Activated CD4-positive, alpha-beta T cell treated with anti-CD3 and anti-CD28 coated beads, Interleukin-2, amount 10 ng/mL, durations not matched to agents 24 days and 14 days (primary cell): ENCODE measurements at regions of chrX and their contacts with region 1.

Region 1: DNA sequence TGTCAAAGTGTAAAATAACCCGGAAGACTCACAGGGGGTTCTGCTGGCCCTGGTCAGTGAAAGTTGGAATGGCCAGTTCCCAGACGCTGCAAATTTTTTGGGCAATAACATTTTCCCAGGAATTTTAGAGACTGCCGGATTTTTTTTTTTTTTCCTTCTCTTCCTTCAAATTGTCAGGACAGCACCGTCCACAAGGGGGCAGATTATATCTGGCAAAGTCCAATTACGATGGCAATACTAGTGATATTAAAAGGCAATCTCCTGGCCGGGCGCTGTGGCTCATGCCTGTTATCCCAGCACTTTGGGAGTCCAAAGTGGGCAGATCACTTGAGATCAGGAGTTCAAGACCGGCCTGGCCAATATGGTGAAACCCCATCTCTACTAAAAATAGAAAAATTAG is 20.5 kb downstream of the SLC25A5 start:
- DNase-seq: peak; percentile 74
- H3K4me3 Mint-ChIP-seq: no peak overlapping the region
- H3K27ac Mint-ChIP-seq: no peak overlapping the region
- H3K4me1 Mint-ChIP-seq: no peaks in the 10 kb centered on the region
- H3K27me3 Mint-ChIP-seq: no peaks in the 10 kb centered on the region

Region 2: GRCh38 chrX:119880552-119881437 is 392.0 kb after region 1 on chrX:
- intact Hi-C with region 1: loop called (anchors 5 kb)
- DNase-seq: peak; percentile 77
- H3K4me3 Mint-ChIP-seq: no peak overlapping the region
- H3K27ac Mint-ChIP-seq: peak overlapping the region; percentile 41
- H3K4me1 Mint-ChIP-seq: peaks cover 10% of the 10 kb centered on the region
- H3K27me3 Mint-ChIP-seq: no peaks in the 10 kb centered on the region